Pancreas (tissue), 10 donors: ENCODE measurements at regions of chr2 and their contacts with region 1.

Region 1: GRCh38 chr2:191555092-191555742 is 122.7 kb upstream of the NABP1 start:
- DNase-seq: peak; percentile 72 to 86 (median 78)
- ATAC-seq: peak; percentile 92 to 100 (median 98)
- H3K4me3 ChIP-seq: no peak overlapping the region
- H3K27ac ChIP-seq: no peak overlapping the region
- H3K4me1 ChIP-seq: no peaks in the 10 kb centered on the region
- H3K27me3 ChIP-seq: peaks cover 0 to 4% (median 0%) of the 10 kb centered on the region in 4 donors
- CTCF ChIP-seq: peak; percentile 40 to 67 (median 50)

Region 2: DNA sequence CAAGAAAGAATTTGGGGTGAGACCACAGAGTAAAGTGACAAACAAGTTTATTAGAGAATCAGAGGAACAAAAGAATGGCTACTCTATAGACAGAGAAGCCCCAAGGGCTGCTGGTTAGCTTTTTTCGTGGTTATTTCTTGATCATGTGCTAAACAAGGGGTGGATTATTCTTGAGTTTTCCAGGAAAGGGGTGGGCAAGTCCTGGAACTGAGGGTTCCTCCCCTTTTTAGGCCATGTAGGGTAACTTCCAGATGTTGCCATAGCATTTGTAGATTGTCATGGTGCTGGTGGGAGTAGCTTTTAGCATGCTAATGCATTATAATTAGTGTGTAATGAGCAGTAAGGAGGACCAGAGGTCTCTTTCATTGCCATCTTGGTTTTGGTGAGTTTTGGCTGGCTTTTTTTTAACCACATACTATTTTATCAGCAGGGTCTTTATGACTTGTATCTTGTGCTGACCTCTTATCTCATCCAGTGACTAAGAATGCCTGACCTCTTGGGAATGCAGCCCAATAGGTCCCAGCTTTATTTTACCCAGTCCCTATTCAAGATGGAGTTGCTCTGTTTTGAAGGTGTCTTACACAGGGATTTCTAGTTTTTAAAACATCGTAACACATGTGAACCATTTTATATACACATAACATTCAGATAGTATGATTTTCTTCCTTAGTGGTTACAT is 232.2 kb before region 1 on chr2:
- intact Hi-C with region 1: no loop called
- DNase-seq: no peak
- ATAC-seq: no peak
- H3K4me3 ChIP-seq: no peak overlapping the region
- H3K27ac ChIP-seq: no peak overlapping the region
- H3K4me1 ChIP-seq: peaks cover 8 to 25% (median 12%) of the 10 kb centered on the region in 3 donors
- H3K27me3 ChIP-seq: no peaks in the 10 kb centered on the region
- CTCF ChIP-seq: no peak

Region 3: GRCh38 chr2:191679818-191680600 is 124.8 kb after region 1 on chr2:
- intact Hi-C with region 1: loop called in 1 of 3 experiments (anchors 5 kb)
- DNase-seq: no peak
- ATAC-seq: no peak
- H3K4me3 ChIP-seq: peak overlapping the region in 1 of 4 donors; percentile 66
- H3K27ac ChIP-seq: peak overlapping the region in 1 of 4 donors; percentile 42
- H3K4me1 ChIP-seq: peaks cover 0 to 15% (median 9%) of the 10 kb centered on the region in 3 donors
- H3K27me3 ChIP-seq: no peaks in the 10 kb centered on the region
- CTCF ChIP-seq: no peak

Region 4: DNA sequence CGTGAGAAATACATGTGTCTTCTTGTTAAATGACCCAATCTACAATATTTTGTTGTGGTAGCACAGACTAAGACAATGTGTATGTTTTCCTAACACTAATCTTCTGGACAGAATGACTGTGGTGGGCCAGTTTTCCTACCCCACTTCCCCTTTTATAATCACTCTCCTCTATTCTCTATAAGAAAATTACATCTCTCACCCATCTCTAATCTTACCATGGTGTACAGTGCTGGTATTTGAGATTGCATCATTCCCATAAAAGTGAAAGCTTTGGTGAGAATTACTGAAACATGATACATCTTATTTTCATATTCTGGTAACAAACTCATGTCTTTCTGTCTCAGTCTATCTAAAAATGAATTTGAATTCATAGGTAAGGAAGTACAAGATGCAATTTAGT is 251.2 kb after region 1 on chr2:
- intact Hi-C with region 1: no loop called
- DNase-seq: no peak
- ATAC-seq: no peak
- H3K4me3 ChIP-seq: no peak overlapping the region
- H3K27ac ChIP-seq: no peak overlapping the region
- H3K4me1 ChIP-seq: no peaks in the 10 kb centered on the region
- H3K27me3 ChIP-seq: no peaks in the 10 kb centered on the region
- CTCF ChIP-seq: no peak

Region 5: DNA sequence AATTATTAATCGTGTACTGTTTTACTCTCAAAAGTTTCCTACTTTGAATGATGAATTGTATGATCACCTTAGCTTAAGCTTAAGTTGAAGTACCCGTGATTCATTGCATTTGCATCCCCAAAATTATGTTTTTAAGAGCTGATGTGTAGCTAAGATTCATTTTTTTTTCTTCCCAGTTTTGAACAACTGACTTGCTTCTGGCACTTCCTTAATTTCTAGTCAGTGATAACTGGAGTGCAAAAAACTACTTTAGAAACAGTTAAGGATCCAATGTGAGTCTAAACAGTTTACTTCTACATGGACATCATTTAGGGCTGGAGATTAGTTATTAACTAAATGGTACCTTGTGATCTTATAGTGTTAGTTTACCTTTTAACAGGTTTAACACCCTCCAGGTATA is 415.6 kb after region 1 on chr2:
- intact Hi-C with region 1: no loop called
- DNase-seq: no peak
- ATAC-seq: no peak
- H3K4me3 ChIP-seq: no peak overlapping the region
- H3K27ac ChIP-seq: no peak overlapping the region
- H3K4me1 ChIP-seq: no peaks in the 10 kb centered on the region
- H3K27me3 ChIP-seq: no peaks in the 10 kb centered on the region
- CTCF ChIP-seq: no peak